Sigmoid colon (tissue), 7 donors: ENCODE measurements at regions of chr11 and their contacts with region 1.

Region 1: DNA sequence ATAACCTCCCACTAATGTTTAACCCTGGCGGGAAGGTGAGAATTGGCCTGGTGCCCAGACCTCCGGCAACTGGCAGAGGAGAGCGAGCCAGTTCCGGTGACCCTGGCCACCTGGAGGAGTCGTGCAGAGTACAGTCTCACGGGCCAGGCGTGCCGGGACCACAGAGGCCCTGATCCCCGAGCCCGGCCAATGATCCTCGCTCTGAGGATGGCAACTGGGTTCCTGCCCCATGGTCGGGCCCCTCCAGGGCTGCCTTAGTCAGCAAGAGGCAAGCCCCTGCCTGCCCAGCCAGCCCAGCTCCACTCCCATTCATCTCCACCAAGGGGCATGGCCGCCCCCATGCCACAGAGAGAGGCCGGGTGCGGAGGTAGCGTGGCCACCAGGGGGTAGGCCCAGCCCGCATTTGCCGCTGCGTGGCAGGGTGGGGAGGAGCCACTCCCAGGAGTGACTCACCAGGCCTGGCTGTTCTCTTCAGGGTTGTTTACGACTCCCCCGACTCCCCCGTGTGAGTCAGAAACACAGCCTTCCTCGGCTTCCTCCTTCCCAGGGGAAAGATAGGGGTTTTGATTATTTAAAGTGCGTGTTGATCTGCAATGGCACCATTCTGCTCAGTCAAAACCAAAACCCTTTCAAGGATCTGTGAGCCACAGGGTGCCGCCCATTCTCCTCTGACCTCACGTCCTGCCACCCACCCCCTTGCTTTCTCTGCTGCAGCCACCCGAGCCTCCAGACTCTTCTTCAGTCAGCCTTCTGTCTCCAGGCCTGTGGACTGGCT is at the start of gene SLC25A45:
- DNase-seq: peak; percentile 98
- H3K4me3 ChIP-seq: peak within 1 kb of the TSS; percentile 27 to 52 (median 46)
- H3K27ac ChIP-seq: peak within 1 kb of the TSS; percentile 95 to 99 (median 96)
- H3K4me1 ChIP-seq: peaks cover 0 to 59% (median 48%) of the 10 kb centered on the region in 4 donors
- H3K27me3 ChIP-seq: no peaks in the 10 kb centered on the region
- CTCF ChIP-seq: peak; percentile 90 to 98 (median 95)
- EP300 ChIP-seq: peak in 2 of 4 donors; percentile 45 to 68
- POLR2A ChIP-seq: peak; percentile 46 to 63
- total RNA-seq, gene SLC25A45: 2.5 to 8.9 (median 6.0) TPM

Region 2: DNA sequence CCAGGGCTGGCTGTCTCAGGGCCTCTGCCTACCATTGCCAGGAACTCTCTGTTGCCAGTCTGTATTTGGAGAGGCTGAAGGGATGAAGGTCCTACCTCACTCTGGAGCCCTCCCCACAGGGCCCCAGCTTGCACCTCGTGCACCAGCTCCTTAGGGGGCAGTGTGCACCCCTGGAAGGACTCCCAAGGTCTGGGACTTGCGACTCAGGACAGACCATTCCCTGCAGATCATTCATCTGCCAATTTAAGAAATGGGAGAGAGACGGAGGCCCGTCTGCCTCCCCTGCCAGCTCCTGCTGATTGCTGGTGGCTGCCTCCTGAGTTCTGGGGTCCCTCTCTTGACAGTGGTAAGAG is 89.2 kb after region 1 on chr11:
- intact Hi-C with region 1: loop called (anchors 5 kb)
- DNase-seq: peak; percentile 95
- H3K4me3 ChIP-seq: peak overlapping the region; percentile 18 to 37 (median 24)
- H3K27ac ChIP-seq: peak overlapping the region; percentile 92 to 100 (median 96)
- H3K4me1 ChIP-seq: peaks cover 0 to 47% (median 32%) of the 10 kb centered on the region in 4 donors
- H3K27me3 ChIP-seq: no peaks in the 10 kb centered on the region
- CTCF ChIP-seq: peak in 3 of 4 experiments; percentile 53 to 59 (median 56)
- EP300 ChIP-seq: peak in 2 of 4 donors; percentile 43 to 88
- POLR2A ChIP-seq: no peak